Activated CD4-positive, alpha-beta memory T cell treated with anti-CD3 and anti-CD28 coated beads for 36 hours (primary cell): ENCODE measurements at regions of chr11 and their contacts with region 1.

Region 1: GRCh38 chr11:75525596-75526541 is at the start of gene GDPD5:
- DNase-seq: peak; percentile 93
- H3K4me3 Mint-ChIP-seq: peak within 1 kb of the TSS; percentile 82
- H3K27ac Mint-ChIP-seq: peak within 1 kb of the TSS; percentile 13
- H3K4me1 Mint-ChIP-seq: peaks cover 27% of the 10 kb centered on the region
- H3K27me3 Mint-ChIP-seq: no peaks in the 10 kb centered on the region
- total RNA-seq, gene GDPD5: 26.5 to 32.0 TPM

Region 2: DNA sequence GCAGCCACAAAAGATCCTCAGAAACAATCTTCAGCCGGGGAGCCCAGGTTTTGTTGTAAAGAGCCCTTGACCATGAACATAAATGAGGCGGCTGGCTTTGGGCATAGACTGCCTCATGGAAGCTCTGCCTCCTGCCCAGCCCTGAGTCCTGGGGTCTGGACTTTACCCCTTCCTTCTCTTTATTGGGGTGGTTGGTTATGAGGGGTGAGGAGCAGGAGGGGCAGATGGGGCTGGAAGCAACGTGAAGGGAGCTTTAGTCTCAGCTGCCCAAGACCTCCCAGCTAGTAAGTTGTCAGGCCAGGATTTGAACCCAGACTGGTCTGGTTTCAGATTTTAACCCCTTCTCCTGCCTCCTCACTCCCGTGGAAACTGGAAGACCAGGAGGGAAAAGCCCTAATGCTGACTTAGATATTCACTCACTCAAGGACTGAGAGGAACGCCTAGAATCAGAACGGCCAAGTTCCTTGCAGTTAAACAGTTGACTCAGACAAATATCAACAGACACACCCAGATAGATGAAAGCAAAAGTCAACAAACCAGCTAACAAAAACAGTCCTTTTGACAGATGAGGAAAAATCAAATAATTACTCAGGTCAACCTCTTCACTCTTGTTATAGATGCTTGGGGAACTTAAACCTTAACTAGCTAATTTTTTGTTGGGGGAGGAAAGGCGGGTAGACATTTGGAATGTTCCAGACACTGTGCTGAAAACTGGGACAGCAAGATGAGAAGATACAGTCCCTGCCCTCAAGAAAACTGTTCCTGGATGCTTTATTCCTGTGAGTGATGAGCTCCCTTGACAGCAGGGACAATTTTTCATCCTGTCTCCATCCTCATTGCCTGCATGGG is 153.7 kb before region 1 on chr11:
- CTCF ChIA-PET with region 1: no interaction called
- POLR2A ChIA-PET with region 1: no interaction called
- intact Hi-C with region 1: no loop called
- DNase-seq: no peak
- H3K4me3 Mint-ChIP-seq: no peak overlapping the region
- H3K27ac Mint-ChIP-seq: no peak overlapping the region
- H3K4me1 Mint-ChIP-seq: peaks cover 2% of the 10 kb centered on the region
- H3K27me3 Mint-ChIP-seq: no peaks in the 10 kb centered on the region

Region 3: DNA sequence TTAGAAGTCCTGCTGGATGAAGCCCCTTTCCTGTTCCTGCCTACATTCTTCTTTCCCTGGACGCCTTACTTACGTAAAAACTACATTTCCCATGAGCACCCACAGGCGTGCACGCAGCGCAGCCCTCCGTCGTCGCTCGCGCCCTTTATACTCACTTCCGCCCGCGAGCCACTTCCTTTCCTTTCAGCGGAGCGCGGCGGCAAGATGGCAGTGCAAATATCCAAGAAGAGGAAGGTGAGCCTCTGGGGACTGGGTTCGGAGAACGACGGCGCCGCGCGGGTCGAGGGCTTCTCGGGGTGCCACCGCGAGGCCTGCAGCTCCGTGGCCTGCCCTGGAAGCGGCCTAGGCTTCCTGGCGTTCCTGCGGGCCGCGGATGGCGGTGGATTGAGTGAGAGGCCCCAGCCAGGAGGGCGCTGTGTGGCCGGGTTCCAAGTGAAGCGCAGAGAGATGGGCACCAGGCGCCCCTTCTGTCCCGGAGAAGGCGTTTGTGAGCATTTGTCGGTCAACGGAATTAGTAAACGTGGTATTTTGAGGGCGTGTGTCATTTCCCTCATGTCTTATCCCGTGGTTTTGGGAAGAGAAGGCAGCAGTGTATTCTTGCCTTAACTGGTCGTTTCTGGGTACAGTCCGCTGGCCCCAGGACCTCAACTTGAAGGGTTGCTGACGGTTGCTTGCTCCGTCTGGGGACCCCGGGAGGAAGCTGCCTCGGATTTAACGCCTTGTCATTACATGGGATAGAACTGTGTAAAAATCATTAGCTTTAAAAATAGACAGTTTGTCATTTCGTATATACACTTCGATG is 126.3 kb before region 1 on chr11 and contains the start of gene RPS3:
- CTCF ChIA-PET with region 1: interaction called, 3 read pairs
- POLR2A ChIA-PET with region 1: interaction called, 3 read pairs
- intact Hi-C with region 1: loop called (anchors 1 kb)
- DNase-seq: peak; percentile 92
- H3K4me3 Mint-ChIP-seq: peak within 1 kb of the TSS; percentile 100
- H3K27ac Mint-ChIP-seq: peak within 1 kb of the TSS; percentile 99
- H3K4me1 Mint-ChIP-seq: peaks cover 39% of the 10 kb centered on the region
- H3K27me3 Mint-ChIP-seq: no peaks in the 10 kb centered on the region
- total RNA-seq, gene RPS3: 4,423 to 4,525 TPM

Region 4: DNA sequence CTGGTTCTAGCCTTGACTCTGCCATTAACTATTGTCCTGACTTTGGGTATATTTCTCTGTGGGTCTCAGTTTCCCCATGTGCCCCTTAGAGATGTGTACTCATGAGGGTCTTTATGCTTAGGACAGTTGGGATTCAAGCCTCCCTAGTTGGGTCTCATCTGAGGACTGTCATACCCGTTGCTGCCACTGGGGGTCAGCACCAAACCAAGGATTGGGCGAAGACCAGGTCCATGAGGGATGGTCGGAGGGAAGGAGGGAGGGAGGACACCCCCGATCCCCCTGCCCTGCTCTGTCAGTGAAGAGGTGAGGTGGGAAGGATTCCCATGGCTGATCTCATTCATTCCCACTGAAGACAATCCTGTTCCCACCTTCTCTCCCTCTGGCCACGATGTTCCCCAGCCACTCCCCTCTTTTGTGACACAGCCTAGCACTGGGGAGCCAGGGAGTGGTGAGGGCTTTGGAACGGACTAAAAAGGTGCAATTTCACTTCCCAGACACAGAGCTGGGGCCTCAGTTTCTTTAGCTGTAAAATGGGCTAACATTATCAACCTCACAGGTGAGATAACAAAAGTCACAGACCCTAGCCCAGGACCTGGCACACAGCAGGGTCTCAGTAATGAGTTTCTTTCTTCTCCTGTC is 80.4 kb before region 1 on chr11:
- CTCF ChIA-PET with region 1: interaction called, 171 read pairs
- POLR2A ChIA-PET with region 1: no interaction called
- intact Hi-C with region 1: no loop called
- DNase-seq: peak; percentile 80
- H3K4me3 Mint-ChIP-seq: no peak overlapping the region
- H3K27ac Mint-ChIP-seq: no peak overlapping the region
- H3K4me1 Mint-ChIP-seq: no peaks in the 10 kb centered on the region
- H3K27me3 Mint-ChIP-seq: no peaks in the 10 kb centered on the region

Region 5: GRCh38 chr11:75450826-75451821 is 74.7 kb before region 1 on chr11:
- CTCF ChIA-PET with region 1: interaction called, 171 read pairs
- POLR2A ChIA-PET with region 1: interaction called, 3 read pairs
- intact Hi-C with region 1: no loop called
- DNase-seq: peak; percentile 59
- H3K4me3 Mint-ChIP-seq: no peak overlapping the region
- H3K27ac Mint-ChIP-seq: no peak overlapping the region
- H3K4me1 Mint-ChIP-seq: no peaks in the 10 kb centered on the region
- H3K27me3 Mint-ChIP-seq: no peaks in the 10 kb centered on the region

Region 6: DNA sequence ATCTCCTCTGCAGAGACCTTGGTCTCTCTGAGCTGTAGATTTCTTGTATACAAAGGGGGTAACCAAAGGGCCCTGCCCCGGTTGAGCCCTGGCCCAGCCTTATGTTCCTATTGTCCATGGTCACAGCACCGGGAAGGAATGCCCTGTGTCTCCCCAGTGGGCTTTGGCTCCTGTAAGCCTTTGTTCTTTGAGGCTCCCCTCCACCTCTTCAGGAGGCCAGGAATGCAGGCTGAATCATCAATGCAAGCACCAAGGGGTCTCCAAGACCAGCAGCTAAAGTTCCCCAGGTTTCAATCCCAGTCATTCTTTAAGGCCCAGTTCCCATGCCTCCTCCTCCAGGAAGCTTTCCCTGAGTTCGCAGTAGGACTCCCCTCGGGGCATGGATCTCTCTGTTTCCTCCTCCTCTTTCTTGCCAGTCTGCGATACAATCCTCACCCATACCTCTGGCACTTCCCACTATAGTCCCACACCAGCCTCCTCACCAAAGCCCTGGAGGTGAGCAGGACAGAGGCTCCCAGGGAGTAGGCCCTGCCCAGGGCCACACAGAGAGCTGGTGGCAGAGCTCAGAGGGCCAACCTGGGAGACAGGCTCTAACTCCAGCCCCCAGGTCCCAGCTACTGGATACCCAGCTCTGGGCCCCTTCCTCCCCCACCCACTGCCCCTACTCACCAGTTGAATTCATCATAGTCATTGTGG is 63.6 kb before region 1 on chr11:
- CTCF ChIA-PET with region 1: no interaction called
- POLR2A ChIA-PET with region 1: no interaction called
- intact Hi-C with region 1: no loop called
- DNase-seq: no peak
- H3K4me3 Mint-ChIP-seq: no peak overlapping the region
- H3K27ac Mint-ChIP-seq: no peak overlapping the region
- H3K4me1 Mint-ChIP-seq: no peaks in the 10 kb centered on the region
- H3K27me3 Mint-ChIP-seq: no peaks in the 10 kb centered on the region

Region 7: DNA sequence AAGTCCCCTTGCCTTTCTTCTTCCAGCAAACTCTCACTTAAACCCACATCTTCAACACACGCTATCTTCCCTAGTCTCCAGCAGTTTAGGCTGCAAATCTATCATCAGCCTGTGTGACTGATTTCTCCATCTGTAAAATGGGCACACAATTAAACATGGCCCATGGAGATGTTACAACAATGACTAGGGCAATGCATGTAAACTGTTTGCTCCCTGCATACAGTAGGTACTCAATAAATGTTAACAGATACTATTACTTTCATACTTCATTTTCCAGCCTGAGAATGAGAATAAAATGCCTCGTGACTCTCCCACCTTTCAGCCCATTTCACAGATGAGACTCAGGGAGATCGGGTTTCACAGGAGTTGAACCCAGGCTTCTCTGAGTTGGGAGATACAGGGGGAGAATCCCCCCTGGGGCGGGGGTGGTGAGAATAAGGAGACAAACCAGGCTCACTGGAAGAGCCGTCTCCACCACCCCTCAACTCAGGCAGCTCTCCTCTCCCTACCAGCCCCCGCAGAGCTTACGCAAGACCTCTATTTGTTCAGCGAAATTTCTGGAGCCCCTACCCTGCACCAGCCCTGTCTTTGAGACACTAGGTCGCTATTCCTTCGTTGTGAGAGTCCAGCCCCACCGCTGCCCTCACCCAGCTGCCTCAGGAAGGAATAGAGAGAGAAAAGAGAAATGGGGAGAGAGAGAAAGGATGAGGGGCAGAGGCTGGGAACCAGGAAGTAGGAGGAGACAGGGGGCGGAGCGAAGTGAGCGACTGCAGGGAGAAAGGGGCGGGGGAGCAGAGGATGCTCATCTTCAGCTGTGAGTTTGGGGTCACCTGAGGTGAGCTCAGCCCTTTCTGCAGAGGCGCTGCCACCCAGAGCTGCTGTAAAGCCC is 50.7 kb before region 1 on chr11:
- CTCF ChIA-PET with region 1: interaction called, 12 read pairs
- POLR2A ChIA-PET with region 1: no interaction called
- intact Hi-C with region 1: no loop called
- DNase-seq: peak; percentile 82
- H3K4me3 Mint-ChIP-seq: peak overlapping the region; percentile 2
- H3K27ac Mint-ChIP-seq: peak overlapping the region; percentile 75
- H3K4me1 Mint-ChIP-seq: peaks cover 15% of the 10 kb centered on the region
- H3K27me3 Mint-ChIP-seq: no peaks in the 10 kb centered on the region

Region 8: GRCh38 chr11:75499449-75500190 is 26.2 kb before region 1 on chr11:
- CTCF ChIA-PET with region 1: interaction called, 3 read pairs
- POLR2A ChIA-PET with region 1: no interaction called
- intact Hi-C with region 1: loop called (anchors 2 kb)
- DNase-seq: no peak
- H3K4me3 Mint-ChIP-seq: no peak overlapping the region
- H3K27ac Mint-ChIP-seq: no peak overlapping the region
- H3K4me1 Mint-ChIP-seq: peaks cover 34% of the 10 kb centered on the region
- H3K27me3 Mint-ChIP-seq: no peaks in the 10 kb centered on the region

Region 9: GRCh38 chr11:75547580-75548058 is 21.8 kb after region 1 on chr11:
- CTCF ChIA-PET with region 1: no interaction called
- POLR2A ChIA-PET with region 1: no interaction called
- intact Hi-C with region 1: no loop called
- DNase-seq: peak; percentile 56
- H3K4me3 Mint-ChIP-seq: no peak overlapping the region
- H3K27ac Mint-ChIP-seq: no peak overlapping the region
- H3K4me1 Mint-ChIP-seq: peaks cover 3% of the 10 kb centered on the region
- H3K27me3 Mint-ChIP-seq: no peaks in the 10 kb centered on the region

Region 10: GRCh38 chr11:75562048-75562835 is 36.4 kb after region 1 on chr11 and contains the start of gene SERPINH1:
- CTCF ChIA-PET with region 1: interaction called, 5 read pairs
- POLR2A ChIA-PET with region 1: no interaction called
- intact Hi-C with region 1: loop called (anchors 1 kb)
- DNase-seq: peak; percentile 89
- H3K4me3 Mint-ChIP-seq: peak within 1 kb of the TSS; percentile 99
- H3K27ac Mint-ChIP-seq: peak within 1 kb of the TSS; percentile 99
- H3K4me1 Mint-ChIP-seq: peaks cover 32% of the 10 kb centered on the region
- H3K27me3 Mint-ChIP-seq: no peaks in the 10 kb centered on the region
- total RNA-seq, gene SERPINH1: 15.2 to 17.4 TPM